ENCODE measurements at regions of chr15 and their contacts with region 1.

Region 1: DNA sequence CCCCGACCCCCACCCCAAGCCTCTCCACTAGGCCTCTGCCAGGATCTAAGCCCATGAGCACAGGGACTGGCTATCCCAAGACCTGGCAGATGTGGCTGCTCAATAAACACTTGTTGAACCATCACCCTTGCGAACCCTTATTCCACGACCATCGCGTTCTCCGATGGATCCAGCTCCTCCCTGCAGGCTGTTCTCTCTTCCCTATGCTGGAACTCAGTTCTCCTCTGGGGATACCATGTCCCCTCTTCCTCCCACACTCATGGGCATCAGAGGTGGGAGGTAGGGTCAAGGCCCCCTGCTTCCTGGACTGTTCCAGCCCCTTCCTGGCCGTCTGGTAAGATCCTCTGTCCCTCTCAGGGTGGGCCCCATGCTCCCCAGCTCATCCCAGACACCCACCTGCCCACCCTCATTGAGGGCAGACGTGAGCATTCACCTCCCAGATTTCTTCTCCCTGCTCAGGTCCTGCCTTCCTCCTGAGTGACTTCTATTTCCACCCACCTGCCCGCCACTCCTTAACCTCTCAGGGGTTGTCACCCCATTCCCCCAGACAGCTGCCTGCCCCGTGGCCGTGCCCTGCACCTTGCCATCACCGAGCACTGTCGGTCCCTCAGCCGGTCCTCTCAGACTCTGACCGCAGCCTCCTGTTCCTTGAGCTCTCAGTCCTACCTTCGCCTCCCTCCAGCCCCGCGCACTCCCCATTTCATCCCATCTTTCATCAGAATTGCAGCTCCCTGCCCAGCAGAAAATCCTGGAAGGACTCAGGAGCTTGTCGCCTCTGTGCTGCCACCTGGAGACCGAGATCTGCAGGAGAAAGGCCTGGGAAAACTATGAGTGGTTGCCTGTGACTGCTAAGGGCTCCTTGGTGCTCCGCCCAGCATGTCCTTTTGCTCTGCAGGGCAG is 42.0 kb downstream of the PML start:
- DNase-seq: no peak
- H3K4me3 ChIP-seq: no peak overlapping the region
- H3K27me3 ChIP-seq: no peaks in the 10 kb centered on the region
- CTCF ChIP-seq: peak; percentile 75

Region 2: DNA sequence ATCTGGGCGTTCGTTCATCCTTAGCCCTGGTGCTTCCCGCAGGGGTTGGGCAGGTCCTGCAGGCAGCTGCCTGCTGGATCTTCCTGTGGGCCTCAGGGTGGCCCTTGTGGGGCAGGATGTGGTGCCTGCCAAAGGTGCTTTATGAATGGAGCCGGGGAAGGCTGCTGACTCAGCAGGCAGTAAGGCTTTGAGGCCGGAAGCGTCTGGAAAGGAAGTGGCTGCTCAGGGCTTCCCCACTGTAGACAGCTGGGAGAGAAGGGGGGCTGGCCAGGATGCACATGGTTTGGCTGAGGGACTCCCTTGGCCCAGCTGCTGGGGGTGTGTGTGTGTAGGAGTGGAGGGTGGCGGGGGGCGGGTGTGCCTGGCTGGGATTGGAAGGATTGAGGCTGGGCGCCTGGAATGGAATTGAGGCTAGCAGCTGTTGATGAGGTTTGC is 339.5 kb before region 1 on chr15:
- CTCF ChIA-PET with region 1: no interaction called
- POLR2A ChIA-PET with region 1: no interaction called
- DNase-seq: no peak
- H3K4me3 ChIP-seq: no peak overlapping the region
- H3K27me3 ChIP-seq: no peaks in the 10 kb centered on the region
- CTCF ChIP-seq: no peak

Region 3: GRCh38 chr15:73982222-73982962 is 54.1 kb before region 1 on chr15:
- CTCF ChIA-PET with region 1: interaction called, 10 read pairs
- POLR2A ChIA-PET with region 1: interaction called, 3 read pairs
- DNase-seq: peak; percentile 69
- H3K4me3 ChIP-seq: no peak overlapping the region
- H3K27me3 ChIP-seq: no peaks in the 10 kb centered on the region
- CTCF ChIP-seq: no peak

Region 4: DNA sequence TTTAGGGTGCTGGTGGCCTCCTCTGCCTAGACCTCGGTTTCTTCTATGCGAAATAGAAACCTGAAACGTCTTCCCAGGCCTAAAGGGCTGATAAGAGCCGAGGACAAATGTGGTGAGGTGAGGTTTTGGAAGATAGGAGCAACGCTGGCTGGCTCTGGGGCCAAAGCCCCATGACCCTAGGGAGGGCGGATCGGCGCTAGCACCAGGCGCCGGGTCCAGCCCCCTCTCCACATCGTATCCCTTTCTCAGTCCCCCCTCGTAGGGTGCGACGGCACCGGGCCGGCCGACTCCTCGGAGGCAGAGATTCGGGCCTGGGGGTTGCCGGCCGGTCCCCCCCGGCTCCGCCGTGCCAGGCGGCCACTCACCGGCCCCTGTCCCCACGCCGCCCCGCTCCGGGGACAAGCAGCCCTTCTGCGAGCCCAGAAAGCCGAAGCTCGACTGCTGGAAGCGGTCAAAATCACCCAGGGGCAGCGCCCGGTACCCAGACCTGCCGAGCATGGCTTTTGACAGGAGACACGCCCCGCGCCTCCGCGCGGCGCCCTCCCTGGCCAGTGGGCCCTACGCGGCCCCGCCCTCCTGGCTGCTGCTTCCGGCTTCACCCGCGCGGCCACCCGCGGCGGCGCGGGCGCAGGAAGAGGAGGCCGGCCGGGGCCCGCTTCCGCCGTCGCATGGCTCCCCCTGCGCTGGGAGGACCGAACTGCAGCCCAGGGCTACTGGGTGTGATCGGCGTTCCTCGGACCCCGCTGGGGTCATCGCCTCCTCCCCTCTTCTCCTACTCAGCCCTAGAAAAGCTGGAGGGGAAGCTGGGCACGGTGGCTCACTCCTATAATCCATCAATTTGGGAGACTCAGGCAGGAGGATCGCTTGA is 44.6 kb before region 1 on chr15 and contains the start of gene STOML1:
- CTCF ChIA-PET with region 1: interaction called, 48 read pairs
- POLR2A ChIA-PET with region 1: no interaction called
- DNase-seq: no peak
- H3K4me3 ChIP-seq: peak within 1 kb of the TSS; percentile 61
- H3K27me3 ChIP-seq: no peaks in the 10 kb centered on the region
- CTCF ChIP-seq: peak; percentile 76
- polyA plus RNA-seq, gene STOML1: 13.2 and 18.3 TPM in 2 replicates

Region 5: DNA sequence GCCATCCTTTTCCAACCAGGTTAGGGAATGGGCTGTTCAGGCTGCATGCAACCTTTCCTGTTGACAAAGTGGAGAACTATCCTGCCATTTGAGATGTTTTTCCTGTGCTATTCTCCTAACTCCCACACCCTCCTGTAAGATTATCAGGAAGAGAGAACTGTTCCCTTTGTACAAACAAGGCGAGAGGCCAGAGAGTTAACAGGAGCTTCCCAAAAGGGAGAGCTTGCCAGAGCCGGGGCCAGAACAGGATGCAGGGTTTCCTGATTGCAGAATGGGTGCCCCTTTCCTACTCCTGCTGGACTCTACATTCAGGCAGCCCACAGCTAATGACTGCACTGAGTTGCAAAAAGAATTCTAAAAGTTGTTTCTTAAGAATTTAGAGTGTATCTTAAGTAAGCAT is 24.9 kb before region 1 on chr15:
- CTCF ChIA-PET with region 1: interaction called, 10 read pairs
- POLR2A ChIA-PET with region 1: interaction called, 7 read pairs
- DNase-seq: no peak
- H3K4me3 ChIP-seq: no peak overlapping the region
- H3K27me3 ChIP-seq: no peaks in the 10 kb centered on the region
- CTCF ChIP-seq: no peak

Region 6: DNA sequence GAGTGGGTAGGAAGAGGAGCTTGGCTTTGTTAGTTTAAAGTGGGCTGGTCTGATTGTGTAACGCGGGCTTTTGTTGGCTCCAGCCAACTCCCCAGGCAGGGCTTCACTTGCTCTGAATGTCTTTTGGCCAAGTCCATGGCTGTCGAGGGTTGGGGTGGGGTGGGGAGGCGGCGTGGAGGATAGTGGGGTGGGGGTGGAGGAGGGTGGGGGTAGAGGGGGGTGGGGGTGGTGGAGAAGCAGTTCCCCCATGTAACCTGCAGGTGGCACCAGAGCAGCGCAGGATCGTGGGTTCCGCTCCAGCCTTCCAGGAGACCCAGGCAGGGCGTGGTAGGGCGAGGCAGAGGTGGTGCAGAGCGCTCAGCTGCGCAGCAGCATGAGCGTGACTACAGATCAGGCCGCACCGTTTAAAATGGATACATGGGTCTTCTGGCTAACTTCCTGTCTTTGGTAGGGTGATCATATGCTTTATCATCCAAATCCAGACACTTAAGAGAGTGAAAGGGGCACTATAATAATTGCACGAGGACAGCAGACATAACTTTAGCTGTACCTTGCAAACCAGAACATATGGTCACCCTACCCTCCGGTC is 17.5 kb after region 1 on chr15:
- CTCF ChIA-PET with region 1: interaction called, 95 read pairs
- POLR2A ChIA-PET with region 1: interaction called, 3 read pairs
- DNase-seq: peak; percentile 51
- H3K4me3 ChIP-seq: no peak overlapping the region
- H3K27me3 ChIP-seq: no peaks in the 10 kb centered on the region
- CTCF ChIP-seq: peak; percentile 76

Region 7: GRCh38 chr15:74146277-74146800 is 109.8 kb after region 1 on chr15:
- CTCF ChIA-PET with region 1: no interaction called
- POLR2A ChIA-PET with region 1: no interaction called
- DNase-seq: no peak
- H3K4me3 ChIP-seq: no peak overlapping the region
- H3K27me3 ChIP-seq: peaks cover 2% of the 10 kb centered on the region; the same call in 1 of the 2 replicates
- CTCF ChIP-seq: no peak

Measured in BJ (cell line).